Esophagus squamous epithelium (tissue), 5 donors: ENCODE measurements at regions of chr7 and their contacts with region 1.

Region 1: DNA sequence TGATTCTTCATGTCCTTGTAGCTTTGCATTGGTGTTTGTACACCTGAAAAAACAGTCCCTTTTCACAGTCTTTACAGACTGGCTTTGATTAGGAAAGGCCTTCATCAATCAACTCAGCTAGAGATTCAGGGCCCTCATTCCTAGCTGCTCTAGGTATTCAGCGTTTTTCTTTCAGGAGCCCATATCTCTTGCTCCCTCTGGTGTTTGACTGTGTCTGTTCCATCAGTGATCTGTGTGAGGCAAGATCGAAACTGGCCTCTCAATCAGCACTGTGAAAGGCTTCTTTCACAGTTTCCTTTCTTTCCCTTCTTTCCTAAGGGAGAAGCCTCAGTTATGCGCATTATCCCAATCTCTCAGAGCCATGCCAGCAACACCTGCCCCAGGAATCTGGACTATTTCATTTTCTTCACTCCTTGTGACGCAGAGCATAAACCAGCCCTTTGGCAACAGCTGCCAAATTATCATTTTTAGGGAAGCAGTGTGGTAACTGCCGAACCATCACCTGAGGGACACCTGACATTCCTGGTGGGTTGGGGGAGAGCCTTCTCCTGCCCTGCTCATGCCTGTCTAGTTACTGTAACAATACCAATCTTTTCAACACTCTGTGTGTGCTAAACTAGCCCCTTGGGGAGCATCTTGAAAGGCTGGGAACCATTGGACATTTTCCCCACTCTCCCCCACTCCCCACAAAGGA is 75.7 kb upstream of the CCDC71L start:
- DNase-seq: no peak
- H3K4me3 ChIP-seq: no peak overlapping the region
- H3K27ac ChIP-seq: peak overlapping the region in 1 of 4 donors; percentile 12
- H3K4me1 ChIP-seq: peaks cover 0 to 14% (median 1%) of the 10 kb centered on the region in 3 donors
- H3K27me3 ChIP-seq: no peaks in the 10 kb centered on the region
- CTCF ChIP-seq: peak; percentile 45 to 75 (median 63)
- POLR2A ChIP-seq: no peak

Region 2: GRCh38 chr7:106176414-106177299 is 560.0 kb before region 1 on chr7:
- intact Hi-C with region 1: loop called (anchors 10 kb)
- DNase-seq: peak; percentile 6
- H3K4me3 ChIP-seq: no peak overlapping the region
- H3K27ac ChIP-seq: peak overlapping the region in 3 of 4 donors; percentile 25 to 61 (median 26)
- H3K4me1 ChIP-seq: peaks cover 5 to 46% (median 13%) of the 10 kb centered on the region in 3 donors
- H3K27me3 ChIP-seq: peaks cover 0 to 12% (median 2%) of the 10 kb centered on the region in 4 donors
- CTCF ChIP-seq: peak; percentile 80 to 96 (median 92)
- POLR2A ChIP-seq: no peak

Region 3: GRCh38 chr7:106542550-106543220 is 194.0 kb before region 1 on chr7:
- intact Hi-C with region 1: loop called (anchors 10 kb)
- DNase-seq: no peak
- H3K4me3 ChIP-seq: no peak overlapping the region
- H3K27ac ChIP-seq: peak overlapping the region in 3 of 4 donors; percentile 62 to 84 (median 72)
- H3K4me1 ChIP-seq: peaks cover 0 to 18% (median 4%) of the 10 kb centered on the region in 3 donors
- H3K27me3 ChIP-seq: no peaks in the 10 kb centered on the region
- CTCF ChIP-seq: peak; percentile 41 to 73 (median 67)
- POLR2A ChIP-seq: no peak

Region 4: DNA sequence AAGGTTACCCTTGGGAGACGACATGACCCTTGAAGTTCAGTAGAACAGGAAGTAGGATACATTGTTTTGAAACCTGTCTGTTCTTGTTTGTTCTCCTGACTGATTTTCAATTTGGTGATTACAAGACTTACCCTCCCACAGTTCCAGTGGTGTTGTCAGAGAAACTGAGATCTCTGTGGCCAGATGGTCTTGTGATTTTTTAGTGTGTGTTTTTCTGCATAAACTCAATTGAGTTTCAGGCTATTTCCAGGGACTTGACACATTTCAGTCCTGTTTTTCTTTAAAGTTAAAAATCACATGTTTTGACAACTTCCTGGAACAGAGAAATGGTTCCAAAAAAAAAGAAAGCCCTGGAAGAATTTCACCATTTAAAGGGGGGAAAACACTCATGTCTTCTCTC is 150.8 kb after region 1 on chr7:
- intact Hi-C with region 1: no loop called
- DNase-seq: no peak
- H3K4me3 ChIP-seq: no peak overlapping the region
- H3K27ac ChIP-seq: no peak overlapping the region
- H3K4me1 ChIP-seq: no peaks in the 10 kb centered on the region
- H3K27me3 ChIP-seq: no peaks in the 10 kb centered on the region
- CTCF ChIP-seq: no peak
- POLR2A ChIP-seq: no peak

Region 5: DNA sequence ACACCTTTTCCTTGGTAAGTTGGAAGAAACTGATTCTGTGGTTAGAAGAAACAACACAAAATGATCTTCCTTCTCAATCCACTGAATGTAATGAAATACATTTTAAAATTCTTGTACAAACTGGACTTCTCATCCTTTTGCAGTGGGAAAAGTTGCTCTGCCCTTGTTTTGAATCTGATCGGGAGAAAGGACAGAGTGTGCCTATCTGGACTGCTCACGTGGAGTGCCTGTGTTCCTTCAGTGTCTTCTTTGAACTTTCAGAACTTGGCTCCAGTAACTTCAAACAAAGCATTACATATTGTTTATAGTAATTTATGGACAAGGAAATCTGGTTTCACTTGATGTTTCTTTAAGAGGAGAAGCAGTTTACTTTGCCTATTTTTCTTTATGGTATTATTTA is 1049.3 kb after region 1 on chr7:
- intact Hi-C with region 1: no loop called
- DNase-seq: no peak
- H3K4me3 ChIP-seq: no peak overlapping the region
- H3K27ac ChIP-seq: peak overlapping the region in 2 of 4 donors; percentile 34 to 48
- H3K4me1 ChIP-seq: peaks cover 0 to 4% (median 0%) of the 10 kb centered on the region in 3 donors
- H3K27me3 ChIP-seq: no peaks in the 10 kb centered on the region
- CTCF ChIP-seq: no peak
- POLR2A ChIP-seq: no peak